Esophagus muscularis mucosa (tissue), 4 donors: ENCODE measurements at regions of chr4 and their contacts with region 1.

Region 1: GRCh38 chr4:78951862-78952472 is 12.7 kb upstream of the PAQR3 start:
- DNase-seq: no peak
- H3K4me3 ChIP-seq: no peak overlapping the region
- H3K27ac ChIP-seq: peak overlapping the region in 2 of 4 donors; percentile 10 to 40
- H3K4me1 ChIP-seq: peaks cover 0 to 20% (median 13%) of the 10 kb centered on the region in 4 donors
- H3K27me3 ChIP-seq: no peaks in the 10 kb centered on the region
- CTCF ChIP-seq: peak; percentile 68 to 80 (median 77)
- EP300 ChIP-seq: no peak
- POLR2A ChIP-seq: no peak

Region 2: DNA sequence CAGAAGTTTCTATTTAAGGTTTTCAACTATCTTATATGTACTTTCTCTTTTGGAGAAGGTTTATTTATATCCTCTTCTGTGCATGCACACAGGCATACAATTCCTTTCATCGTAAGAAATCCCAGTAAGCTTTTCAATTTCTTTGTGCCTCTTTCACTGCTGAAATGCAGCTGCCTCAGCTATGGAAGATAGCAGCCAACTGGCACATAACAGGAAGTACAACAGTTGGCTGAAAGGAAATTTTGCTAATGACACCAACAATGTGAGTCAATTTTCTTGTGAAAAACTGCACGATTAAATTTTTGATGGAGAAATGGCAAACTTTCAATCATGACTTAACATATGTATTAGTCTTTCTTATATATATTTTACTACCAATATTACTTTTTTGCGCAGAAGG is 61.8 kb after region 1 on chr4:
- intact Hi-C with region 1: no loop called
- DNase-seq: no peak
- H3K4me3 ChIP-seq: no peak overlapping the region
- H3K27ac ChIP-seq: no peak overlapping the region
- H3K4me1 ChIP-seq: no peaks in the 10 kb centered on the region
- H3K27me3 ChIP-seq: no peaks in the 10 kb centered on the region
- CTCF ChIP-seq: no peak
- EP300 ChIP-seq: no peak
- POLR2A ChIP-seq: no peak

Region 3: DNA sequence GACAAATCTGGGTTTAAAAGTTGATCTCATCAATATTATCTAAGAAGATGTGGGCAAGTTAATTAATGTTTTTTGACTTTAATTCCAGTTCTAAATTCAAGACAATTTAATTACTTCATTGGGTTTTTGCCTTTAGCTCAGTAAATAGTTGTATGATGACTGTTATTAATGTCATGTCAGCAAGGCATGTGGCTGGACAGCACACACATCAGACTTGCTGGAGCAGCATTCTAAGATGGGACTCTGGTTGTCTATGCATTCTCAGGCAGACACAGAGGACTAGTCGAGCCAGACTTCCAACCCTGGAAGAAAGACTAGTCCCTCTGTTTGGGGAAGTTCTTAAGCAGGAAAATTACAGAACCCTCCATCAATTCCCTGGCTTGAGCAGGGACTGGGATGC is 636.7 kb after region 1 on chr4:
- intact Hi-C with region 1: loop called (anchors 10 kb)
- DNase-seq: no peak
- H3K4me3 ChIP-seq: no peak overlapping the region
- H3K27ac ChIP-seq: no peak overlapping the region
- H3K4me1 ChIP-seq: peaks cover 16 to 45% (median 33%) of the 10 kb centered on the region in 4 donors
- H3K27me3 ChIP-seq: no peaks in the 10 kb centered on the region
- CTCF ChIP-seq: no peak
- EP300 ChIP-seq: no peak
- POLR2A ChIP-seq: no peak

Region 4: GRCh38 chr4:80058740-80059139 is 1106.8 kb after region 1 on chr4:
- intact Hi-C with region 1: loop called (anchors 10 kb)
- DNase-seq: no peak
- H3K4me3 ChIP-seq: no peak overlapping the region
- H3K27ac ChIP-seq: peak overlapping the region in 3 of 4 donors; percentile 35 to 58 (median 51)
- H3K4me1 ChIP-seq: peaks cover 6 to 88% (median 70%) of the 10 kb centered on the region in 4 donors
- H3K27me3 ChIP-seq: no peaks in the 10 kb centered on the region
- CTCF ChIP-seq: no peak
- EP300 ChIP-seq: no peak
- POLR2A ChIP-seq: no peak

Region 5: GRCh38 chr4:80184053-80184790 is 1232.3 kb after region 1 on chr4:
- intact Hi-C with region 1: loop called (anchors 10 kb)
- DNase-seq: no peak
- H3K4me3 ChIP-seq: peak overlapping the region; percentile 73 to 97 (median 85)
- H3K27ac ChIP-seq: peak overlapping the region; percentile 86 to 93 (median 88)
- H3K4me1 ChIP-seq: peaks cover 32 to 56% (median 47%) of the 10 kb centered on the region in 4 donors
- H3K27me3 ChIP-seq: no peaks in the 10 kb centered on the region
- CTCF ChIP-seq: peak; percentile 88 to 96 (median 90)
- EP300 ChIP-seq: no peak
- POLR2A ChIP-seq: no peak

Region 6: GRCh38 chr4:80213117-80213815 is 1261.3 kb after region 1 on chr4:
- intact Hi-C with region 1: loop called (anchors 5 kb)
- DNase-seq: no peak
- H3K4me3 ChIP-seq: no peak overlapping the region
- H3K27ac ChIP-seq: peak overlapping the region in 3 of 4 donors; percentile 2 to 47 (median 26)
- H3K4me1 ChIP-seq: peaks cover 3 to 21% (median 12%) of the 10 kb centered on the region in 4 donors
- H3K27me3 ChIP-seq: no peaks in the 10 kb centered on the region
- CTCF ChIP-seq: no peak
- EP300 ChIP-seq: no peak
- POLR2A ChIP-seq: no peak